ENCODE measurements at regions of chr19 and their contacts with region 1.

Region 1: GRCh38 chr19:49097455-49098288 is 12.4 kb downstream of the SNRNP70 start:
- DNase-seq: peak; percentile 53
- H3K4me3 ChIP-seq: no peak overlapping the region
- H3K27ac ChIP-seq: no peak overlapping the region
- H3K27me3 ChIP-seq: no peaks in the 10 kb centered on the region
- CTCF ChIP-seq: peak; percentile 99

Region 2: DNA sequence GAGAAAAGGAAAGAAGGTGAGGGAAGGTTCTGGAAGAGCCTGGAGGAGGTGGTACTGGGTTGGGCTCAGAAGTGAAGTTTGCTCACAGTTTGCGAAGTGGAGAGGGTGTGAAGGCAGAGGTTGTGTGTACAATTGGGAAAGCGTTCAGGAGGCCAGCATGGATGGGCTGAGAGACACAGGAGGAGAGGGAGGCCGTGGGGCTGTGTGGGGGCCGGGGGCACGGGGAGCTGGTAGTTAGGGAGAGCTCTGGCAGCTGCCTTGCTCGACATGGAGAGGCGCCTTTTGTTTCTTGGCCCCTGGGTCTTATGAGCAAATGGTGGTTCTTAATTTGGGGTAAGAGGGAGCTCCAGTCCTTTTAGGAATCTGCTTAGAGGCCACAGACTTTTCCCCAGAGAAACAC is 1472.0 kb before region 1 on chr19:
- CTCF ChIA-PET with region 1: interaction called, 12 read pairs
- POLR2A ChIA-PET with region 1: no interaction called
- DNase-seq: no peak
- H3K4me3 ChIP-seq: no peak overlapping the region
- H3K27ac ChIP-seq: no peak overlapping the region
- H3K27me3 ChIP-seq: no peaks in the 10 kb centered on the region
- CTCF ChIP-seq: no peak

Region 3: GRCh38 chr19:49085020-49085867 is 12.4 kb before region 1 on chr19 and contains the start of gene SNRNP70:
- CTCF ChIA-PET with region 1: interaction called, 27 read pairs
- POLR2A ChIA-PET with region 1: interaction called, 3 read pairs
- DNase-seq: peak; percentile 99
- H3K4me3 ChIP-seq: peak within 1 kb of the TSS; percentile 96
- H3K27ac ChIP-seq: peak within 1 kb of the TSS; percentile 88
- H3K27me3 ChIP-seq: no peaks in the 10 kb centered on the region
- CTCF ChIP-seq: no peak
- polyA plus RNA-seq, gene SNRNP70: 117 and 149 TPM in 2 replicates

Region 4: DNA sequence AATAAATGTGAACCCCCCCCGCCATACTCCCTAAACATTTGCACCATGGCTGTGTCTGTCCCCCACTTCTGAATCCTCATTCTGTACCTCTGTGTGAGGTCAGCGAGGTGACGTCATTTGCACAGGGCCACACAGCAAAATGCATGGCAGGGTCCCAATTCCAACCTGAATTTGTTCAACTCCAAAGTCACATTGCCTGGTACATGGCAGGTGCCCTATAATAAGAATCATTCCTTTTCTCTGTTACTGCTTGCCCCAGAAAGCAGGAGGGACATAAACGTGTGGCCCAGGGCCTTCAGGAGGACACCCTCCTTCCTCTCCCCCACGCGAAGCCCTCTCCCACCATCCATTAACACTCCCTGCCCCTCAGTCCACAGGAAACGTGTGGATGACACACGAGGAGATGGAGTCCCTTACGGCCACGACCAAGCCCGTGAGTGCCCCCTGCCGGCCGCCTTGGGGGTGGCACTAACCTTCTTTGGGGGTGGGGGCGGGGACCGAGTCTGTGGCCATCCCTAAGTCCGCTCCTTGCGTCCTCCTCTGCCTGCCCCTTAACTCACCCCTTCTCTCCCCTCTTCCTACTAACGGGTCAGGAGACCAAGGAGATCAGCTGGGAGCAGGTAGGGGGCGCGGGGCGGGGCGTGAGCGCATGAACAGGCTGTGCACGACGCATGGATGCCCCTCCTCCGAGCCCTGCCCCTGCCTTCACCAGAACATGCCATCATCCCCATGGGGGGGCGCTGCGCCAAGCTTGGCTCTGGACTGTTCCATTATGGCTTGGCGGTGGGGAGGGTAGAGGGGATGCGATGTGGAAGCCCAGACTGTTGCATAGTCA is 48.1 kb after region 1 on chr19:
- CTCF ChIA-PET with region 1: interaction called, 13 read pairs
- POLR2A ChIA-PET with region 1: interaction called, 3 read pairs
- DNase-seq: no peak
- H3K4me3 ChIP-seq: peak overlapping the region; percentile 47
- H3K27ac ChIP-seq: no peak overlapping the region
- H3K27me3 ChIP-seq: no peaks in the 10 kb centered on the region
- CTCF ChIP-seq: peak; percentile 82

Region 5: GRCh38 chr19:49157445-49158224 is 60.0 kb after region 1 on chr19 and contains the start of gene TRPM4:
- CTCF ChIA-PET with region 1: no interaction called
- POLR2A ChIA-PET with region 1: no interaction called
- DNase-seq: no peak
- H3K4me3 ChIP-seq: peak within 1 kb of the TSS; percentile 94
- H3K27ac ChIP-seq: no peak within 1 kb of the TSS
- H3K27me3 ChIP-seq: no peaks in the 10 kb centered on the region
- CTCF ChIP-seq: no peak
- polyA plus RNA-seq, gene TRPM4: 4.3 and 6.3 TPM in 2 replicates

Region 6: GRCh38 chr19:49224856-49225255 is 127.2 kb after region 1 on chr19:
- CTCF ChIA-PET with region 1: interaction called, 11 read pairs
- POLR2A ChIA-PET with region 1: no interaction called
- DNase-seq: no peak
- H3K4me3 ChIP-seq: no peak overlapping the region
- H3K27ac ChIP-seq: no peak overlapping the region
- H3K27me3 ChIP-seq: peaks cover 2% of the 10 kb centered on the region
- CTCF ChIP-seq: peak; percentile 43

Region 7: GRCh38 chr19:49272184-49272583 is 174.5 kb after region 1 on chr19:
- CTCF ChIA-PET with region 1: no interaction called
- POLR2A ChIA-PET with region 1: no interaction called
- DNase-seq: no peak
- H3K4me3 ChIP-seq: no peak overlapping the region
- H3K27ac ChIP-seq: no peak overlapping the region
- H3K27me3 ChIP-seq: peaks cover 3% of the 10 kb centered on the region
- CTCF ChIP-seq: no peak

Region 8: GRCh38 chr19:49421039-49421877 is 323.6 kb after region 1 on chr19:
- CTCF ChIA-PET with region 1: no interaction called
- POLR2A ChIA-PET with region 1: no interaction called
- DNase-seq: no peak
- H3K4me3 ChIP-seq: no peak overlapping the region
- H3K27ac ChIP-seq: no peak overlapping the region
- H3K27me3 ChIP-seq: peaks cover 87% of the 10 kb centered on the region
- CTCF ChIP-seq: no peak

Measured in AG04450 (cell line).